ENCODE measurements at regions of chr19 and their contacts with region 1.

Region 1: GRCh38 chr19:34428549-34429285 is 536 bp downstream of the UBA2 start:
- DNase-seq: peak; percentile 64 to 89 (median 78)
- ATAC-seq: peak; percentile 76
- H3K4me3 ChIP-seq: peak overlapping the region; percentile 97
- H3K27ac ChIP-seq: peak overlapping the region; percentile 93
- H3K4me1 ChIP-seq: peaks cover 3 to 16% of the 10 kb centered on the region in 2 experiments; a peak in 4 of 5 replicates
- H3K27me3 ChIP-seq: no peaks in the 10 kb centered on the region
- CTCF ChIP-seq: no peak
- EP300 ChIP-seq: no peak
- POLR2A ChIP-seq: no peak
- RAD21 ChIP-seq: no peak

Region 2: GRCh38 chr19:34345947-34346351 is 82.8 kb before region 1 on chr19:
- CTCF ChIA-PET with region 1: no interaction called
- POLR2A ChIA-PET with region 1: no interaction called
- in situ Hi-C with region 1: no loop called
- intact Hi-C with region 1: loop called (anchors 1 kb)
- DNase-seq: peak; percentile 77 to 90 (median 82)
- ATAC-seq: peak; percentile 96
- H3K4me3 ChIP-seq: no peak overlapping the region
- H3K27ac ChIP-seq: no peak overlapping the region
- H3K4me1 ChIP-seq: peaks cover 0 to 3% of the 10 kb centered on the region in 2 experiments; a peak in 1 of 5 replicates
- H3K27me3 ChIP-seq: no peaks in the 10 kb centered on the region
- CTCF ChIP-seq: peak; percentile 82 to 86 (median 85)
- EP300 ChIP-seq: no peak
- POLR2A ChIP-seq: no peak
- RAD21 ChIP-seq: peak in 1 of 2 experiments; percentile 73; a peak in 2 of 4 replicates

Region 3: GRCh38 chr19:34416021-34416545 is 12.6 kb before region 1 on chr19:
- CTCF ChIA-PET with region 1: no interaction called
- POLR2A ChIA-PET with region 1: interaction called, 10 read pairs
- in situ Hi-C with region 1: no loop called
- intact Hi-C with region 1: no loop called
- DNase-seq: no peak
- ATAC-seq: no peak
- H3K4me3 ChIP-seq: no peak overlapping the region
- H3K27ac ChIP-seq: no peak overlapping the region
- H3K4me1 ChIP-seq: no peaks in the 10 kb centered on the region
- H3K27me3 ChIP-seq: no peaks in the 10 kb centered on the region
- CTCF ChIP-seq: no peak
- EP300 ChIP-seq: no peak
- POLR2A ChIP-seq: no peak
- RAD21 ChIP-seq: no peak